GM12878 (cell line): ENCODE measurements at regions of chr13 and their contacts with region 1.

Region 1: DNA sequence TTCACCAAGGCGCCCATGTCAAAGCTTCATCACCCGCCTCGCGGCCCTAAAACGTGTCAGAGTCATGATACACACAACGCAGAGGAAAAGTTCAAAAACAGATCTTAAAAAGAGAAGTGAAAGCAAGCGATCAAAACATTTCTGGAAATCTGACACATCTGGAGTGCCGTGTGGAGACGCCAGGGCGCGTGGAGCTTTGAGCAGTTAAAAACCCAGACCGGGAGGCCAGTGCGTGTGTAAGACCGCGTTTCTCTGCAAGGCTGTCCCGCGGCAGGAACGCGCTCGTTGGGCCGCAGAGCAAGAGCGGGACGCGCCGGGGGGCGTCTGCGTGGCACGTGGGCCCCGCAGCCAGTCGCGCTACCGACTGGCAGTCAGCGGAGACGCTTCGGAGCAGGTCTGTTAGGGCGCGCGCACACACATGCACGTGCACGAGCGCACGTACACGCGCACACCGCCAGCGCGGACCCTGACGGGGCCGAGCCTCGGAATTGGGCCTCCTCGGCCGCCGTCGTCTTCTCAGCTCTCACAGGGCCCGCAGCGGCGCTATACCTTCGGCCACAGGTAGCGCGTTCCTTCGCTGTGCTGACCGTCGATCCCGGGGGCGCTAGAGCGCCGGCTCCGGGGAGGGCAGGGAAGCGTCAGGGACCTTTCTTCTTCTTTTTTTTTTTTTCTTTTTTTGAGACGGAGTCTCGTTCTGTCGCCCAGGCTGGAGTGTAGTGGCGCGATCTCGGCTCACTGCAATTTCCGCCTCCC is 35.8 kb downstream of the RNF6 start:
- DNase-seq: peak; percentile 66
- ATAC-seq: peak; percentile 93
- H3K4me3 ChIP-seq: peak overlapping the region; percentile 74
- H3K27ac ChIP-seq: peak overlapping the region; percentile 39
- H3K4me1 ChIP-seq: peaks cover 9% of the 10 kb centered on the region
- H3K27me3 ChIP-seq: no peaks in the 10 kb centered on the region
- CTCF ChIP-seq: peak; percentile 54 to 65 (median 60)
- EP300 ChIP-seq: no peak
- POLR2A ChIP-seq: peak; percentile 90
- RAD21 ChIP-seq: peak; percentile 49

Region 2: DNA sequence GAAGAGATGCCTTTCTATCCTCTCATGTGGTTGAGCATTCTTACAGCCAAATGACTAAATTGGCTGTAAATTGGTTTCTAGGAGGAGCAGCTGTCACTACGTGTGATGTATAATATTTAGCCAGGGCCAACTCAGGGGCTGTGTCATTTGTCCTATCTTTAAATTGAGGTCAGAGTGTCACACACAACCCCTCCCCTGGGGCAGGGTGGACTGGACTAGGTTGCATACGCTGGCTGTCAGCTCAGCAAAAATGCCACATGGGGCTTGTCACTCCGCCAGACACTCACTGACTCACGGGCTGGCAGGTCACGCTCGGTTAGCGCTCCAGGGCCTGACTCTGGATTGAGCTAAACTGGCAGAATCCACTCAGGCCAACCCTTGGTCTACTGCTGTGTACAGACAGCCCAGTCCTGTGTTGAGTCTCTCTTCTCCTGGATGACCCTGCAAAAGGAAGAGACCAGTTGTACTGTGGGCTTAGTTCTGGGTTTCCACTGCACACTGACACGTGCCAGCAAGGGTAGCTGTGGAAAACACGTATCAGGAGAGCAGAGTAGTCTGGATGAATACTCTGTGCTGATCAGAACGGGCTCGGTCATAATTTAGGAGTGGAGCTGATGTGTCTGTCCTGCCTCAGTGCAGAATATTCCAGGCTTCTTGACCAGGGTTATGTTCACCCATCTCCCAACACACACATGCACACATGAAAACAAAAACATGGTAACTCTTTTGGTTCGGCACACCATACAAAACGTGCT is 163.6 kb before region 1 on chr13:
- CTCF ChIA-PET with region 1: no interaction called
- POLR2A ChIA-PET with region 1: no interaction called
- RAD21 ChIA-PET with region 1: no interaction called
- SMC1A ChIA-PET with region 1: no interaction called
- in situ Hi-C with region 1: no loop called
- intact Hi-C with region 1: no loop called
- DNase-seq: no peak
- ATAC-seq: peak; percentile 58
- H3K4me3 ChIP-seq: no peak overlapping the region
- H3K27ac ChIP-seq: no peak overlapping the region
- H3K4me1 ChIP-seq: no peaks in the 10 kb centered on the region
- H3K27me3 ChIP-seq: no peaks in the 10 kb centered on the region; a peak in 2 of 4 replicates
- CTCF ChIP-seq: no peak
- EP300 ChIP-seq: no peak
- POLR2A ChIP-seq: no peak
- RAD21 ChIP-seq: no peak

Region 3: DNA sequence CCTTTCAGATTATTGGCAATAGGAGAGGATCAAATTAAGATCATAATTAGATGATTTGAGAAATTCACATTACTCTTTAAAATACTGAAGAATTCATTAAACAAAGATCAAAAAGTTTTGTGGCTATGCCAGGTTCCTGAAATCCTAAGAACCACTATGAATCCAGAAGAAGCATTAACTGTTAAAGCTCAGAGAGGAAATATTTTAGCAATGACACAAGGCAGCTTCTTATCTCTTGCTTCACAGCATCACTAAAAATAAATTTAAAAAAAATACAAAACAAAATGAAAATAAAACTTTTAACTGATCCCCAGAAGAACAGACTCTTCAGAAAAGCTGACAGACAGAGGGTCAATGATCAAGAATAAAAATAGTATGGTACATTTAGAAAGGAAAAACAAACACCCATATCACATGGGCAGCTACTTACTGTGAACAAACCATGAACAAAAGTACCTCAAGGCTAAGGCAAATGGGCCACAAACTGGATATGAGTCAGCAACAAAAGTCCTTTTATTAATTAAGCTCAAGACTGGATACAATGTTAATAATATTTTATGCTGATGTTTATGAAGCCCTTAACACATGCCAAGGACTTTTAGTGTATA is 16.2 kb after region 1 on chr13:
- CTCF ChIA-PET with region 1: interaction called, 12 read pairs
- POLR2A ChIA-PET with region 1: no interaction called
- RAD21 ChIA-PET with region 1: interaction called, 4 read pairs
- SMC1A ChIA-PET with region 1: interaction called, 6 read pairs
- in situ Hi-C with region 1: no loop called
- intact Hi-C with region 1: no loop called
- DNase-seq: no peak
- ATAC-seq: no peak
- H3K4me3 ChIP-seq: no peak overlapping the region
- H3K27ac ChIP-seq: no peak overlapping the region
- H3K4me1 ChIP-seq: no peaks in the 10 kb centered on the region
- H3K27me3 ChIP-seq: no peaks in the 10 kb centered on the region
- CTCF ChIP-seq: no peak
- EP300 ChIP-seq: no peak
- POLR2A ChIP-seq: no peak
- RAD21 ChIP-seq: no peak

Region 4: GRCh38 chr13:26253787-26254582 is 67.7 kb after region 1 on chr13 and contains the start of gene CDK8:
- CTCF ChIA-PET with region 1: interaction called, 15 read pairs
- POLR2A ChIA-PET with region 1: no interaction called
- RAD21 ChIA-PET with region 1: interaction called, 5 read pairs
- SMC1A ChIA-PET with region 1: no interaction called
- in situ Hi-C with region 1: no loop called
- intact Hi-C with region 1: loop called (anchors 5 kb)
- DNase-seq: peak; percentile 48
- ATAC-seq: peak; percentile 89
- H3K4me3 ChIP-seq: peak within 1 kb of the TSS; percentile 80
- H3K27ac ChIP-seq: peak within 1 kb of the TSS; percentile 86
- H3K4me1 ChIP-seq: no peaks in the 10 kb centered on the region
- H3K27me3 ChIP-seq: no peaks in the 10 kb centered on the region; a peak in 1 of 4 replicates
- CTCF ChIP-seq: no peak
- EP300 ChIP-seq: no peak
- POLR2A ChIP-seq: peak; percentile 87
- RAD21 ChIP-seq: no peak
- polyA plus RNA-seq, gene CDK8: 9.9 to 10.6 TPM

Region 5: DNA sequence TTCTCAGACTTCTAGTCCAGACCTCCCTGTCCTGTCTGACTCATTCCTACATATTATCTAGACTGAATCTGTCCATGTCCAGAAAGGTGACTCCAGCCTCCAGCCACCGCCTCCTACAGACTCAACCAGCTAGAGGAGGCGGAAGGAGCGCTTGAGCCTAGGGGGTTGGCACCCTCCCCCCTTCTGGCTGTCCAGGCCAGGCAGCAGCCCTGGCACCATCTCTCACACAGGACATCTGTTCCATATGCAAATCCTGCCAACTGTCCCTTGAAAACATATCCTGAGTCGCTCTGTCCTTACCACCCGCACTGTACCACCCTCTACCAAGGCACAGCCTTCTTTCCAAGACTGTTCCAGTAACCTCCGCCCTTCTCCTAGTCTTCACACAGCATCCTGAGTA is 220.5 kb after region 1 on chr13:
- CTCF ChIA-PET with region 1: interaction called, 4 read pairs
- POLR2A ChIA-PET with region 1: no interaction called
- RAD21 ChIA-PET with region 1: no interaction called
- SMC1A ChIA-PET with region 1: interaction called, 3 read pairs
- in situ Hi-C with region 1: no loop called
- intact Hi-C with region 1: loop called (anchors 10 kb)
- DNase-seq: no peak
- ATAC-seq: no peak
- H3K4me3 ChIP-seq: no peak overlapping the region
- H3K27ac ChIP-seq: no peak overlapping the region
- H3K4me1 ChIP-seq: no peaks in the 10 kb centered on the region
- H3K27me3 ChIP-seq: no peaks in the 10 kb centered on the region
- CTCF ChIP-seq: no peak
- EP300 ChIP-seq: no peak
- POLR2A ChIP-seq: no peak
- RAD21 ChIP-seq: no peak

Region 6: DNA sequence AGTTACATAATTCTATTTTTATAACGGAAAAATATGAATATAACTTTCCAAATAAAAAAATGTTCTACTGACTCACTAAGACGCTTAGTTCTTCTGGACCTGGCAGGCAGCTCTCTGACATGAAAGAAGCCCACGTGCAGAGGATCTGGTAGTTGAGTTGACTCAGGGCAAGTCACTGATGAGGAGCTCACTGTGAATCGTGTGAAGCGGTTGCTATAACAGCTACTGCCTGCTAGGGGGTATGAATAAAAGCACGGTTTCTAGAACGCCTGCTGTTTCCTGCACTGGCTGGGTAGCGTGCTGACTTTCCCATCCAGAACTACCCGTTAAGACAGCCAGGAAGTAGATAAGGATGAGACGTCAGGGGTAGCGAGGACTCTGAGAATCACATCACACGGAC is 316.5 kb after region 1 on chr13:
- CTCF ChIA-PET with region 1: interaction called, 218 read pairs
- POLR2A ChIA-PET with region 1: no interaction called
- RAD21 ChIA-PET with region 1: interaction called, 76 read pairs
- SMC1A ChIA-PET with region 1: interaction called, 70 read pairs
- in situ Hi-C with region 1: no loop called
- intact Hi-C with region 1: no loop called
- DNase-seq: no peak
- ATAC-seq: peak; percentile 29; the same call in 1 of the 3 replicates
- H3K4me3 ChIP-seq: no peak overlapping the region
- H3K27ac ChIP-seq: no peak overlapping the region
- H3K4me1 ChIP-seq: no peaks in the 10 kb centered on the region
- H3K27me3 ChIP-seq: no peaks in the 10 kb centered on the region; a peak in 1 of 4 replicates
- CTCF ChIP-seq: no peak
- EP300 ChIP-seq: no peak
- POLR2A ChIP-seq: no peak
- RAD21 ChIP-seq: no peak

Region 7: GRCh38 chr13:26872525-26873385 is 686.5 kb after region 1 on chr13:
- CTCF ChIA-PET with region 1: interaction called, 22 read pairs
- POLR2A ChIA-PET with region 1: no interaction called
- RAD21 ChIA-PET with region 1: no interaction called
- SMC1A ChIA-PET with region 1: interaction called, 4 read pairs
- in situ Hi-C with region 1: no loop called
- intact Hi-C with region 1: loop called (anchors 10 kb)
- DNase-seq: no peak
- ATAC-seq: peak; percentile 86
- H3K4me3 ChIP-seq: no peak overlapping the region
- H3K27ac ChIP-seq: no peak overlapping the region
- H3K4me1 ChIP-seq: no peaks in the 10 kb centered on the region
- H3K27me3 ChIP-seq: no peaks in the 10 kb centered on the region; a peak in 1 of 4 replicates
- CTCF ChIP-seq: peak; percentile 65 to 84 (median 80)
- EP300 ChIP-seq: no peak
- POLR2A ChIP-seq: no peak
- RAD21 ChIP-seq: peak; percentile 45